ENCODE measurements at regions of chr5 and their contacts with region 1.

Region 1: GRCh38 chr5:141564216-141564692 is 54.5 kb downstream of the DIAPH1 start:
- DNase-seq: peak; percentile 75
- ATAC-seq: peak; percentile 90
- H3K4me3 Mint-ChIP-seq: peak overlapping the region; percentile 12
- H3K27ac Mint-ChIP-seq: peak overlapping the region; percentile 74
- H3K4me1 Mint-ChIP-seq: peaks cover 41% of the 10 kb centered on the region
- H3K27me3 Mint-ChIP-seq: no peaks in the 10 kb centered on the region

Region 2: DNA sequence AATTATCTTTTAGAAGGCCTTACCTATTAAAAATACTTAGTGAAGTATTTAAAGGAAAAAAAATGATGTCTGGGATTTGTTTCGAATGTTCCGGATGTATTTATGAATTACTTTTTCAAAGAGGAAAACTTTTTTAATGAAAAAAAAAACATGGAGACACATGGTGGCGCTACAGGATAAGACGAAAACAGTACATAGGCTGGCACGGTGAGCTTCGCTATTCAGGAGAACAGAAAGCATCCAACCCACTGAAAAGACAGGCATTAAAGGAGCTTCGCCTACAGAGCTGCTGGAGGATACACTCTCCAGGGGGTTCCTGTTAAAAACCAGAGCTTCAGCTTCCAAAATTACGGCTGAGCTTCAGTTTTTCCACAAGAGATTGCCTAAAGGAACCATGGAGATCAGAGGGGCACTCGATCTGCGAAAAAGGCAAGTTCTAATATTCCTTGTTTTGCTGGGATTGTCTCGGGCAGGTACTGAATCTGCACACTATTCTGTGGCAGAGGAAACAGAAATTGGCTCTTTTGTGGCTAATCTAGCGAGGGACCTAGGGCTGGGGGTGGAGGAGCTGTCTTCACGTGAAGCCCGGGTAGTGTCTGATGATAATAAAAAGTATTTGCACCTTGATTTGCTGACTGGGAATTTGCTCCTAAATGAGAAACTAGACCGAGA is 341.0 kb before region 1 on chr5 and contains the start of gene PCDHB14:
- CTCF ChIA-PET with region 1: interaction called, 10 read pairs
- POLR2A ChIA-PET with region 1: no interaction called
- intact Hi-C with region 1: loop called in 1 of 2 experiments (anchors 5 kb)
- DNase-seq: no peak
- ATAC-seq: no peak
- H3K4me3 Mint-ChIP-seq: peak within 1 kb of the TSS; percentile 18
- H3K27ac Mint-ChIP-seq: no peak within 1 kb of the TSS
- H3K4me1 Mint-ChIP-seq: peaks cover 5% of the 10 kb centered on the region
- H3K27me3 Mint-ChIP-seq: peaks cover 48% of the 10 kb centered on the region
- total RNA-seq, gene PCDHB14: not detected

Region 3: DNA sequence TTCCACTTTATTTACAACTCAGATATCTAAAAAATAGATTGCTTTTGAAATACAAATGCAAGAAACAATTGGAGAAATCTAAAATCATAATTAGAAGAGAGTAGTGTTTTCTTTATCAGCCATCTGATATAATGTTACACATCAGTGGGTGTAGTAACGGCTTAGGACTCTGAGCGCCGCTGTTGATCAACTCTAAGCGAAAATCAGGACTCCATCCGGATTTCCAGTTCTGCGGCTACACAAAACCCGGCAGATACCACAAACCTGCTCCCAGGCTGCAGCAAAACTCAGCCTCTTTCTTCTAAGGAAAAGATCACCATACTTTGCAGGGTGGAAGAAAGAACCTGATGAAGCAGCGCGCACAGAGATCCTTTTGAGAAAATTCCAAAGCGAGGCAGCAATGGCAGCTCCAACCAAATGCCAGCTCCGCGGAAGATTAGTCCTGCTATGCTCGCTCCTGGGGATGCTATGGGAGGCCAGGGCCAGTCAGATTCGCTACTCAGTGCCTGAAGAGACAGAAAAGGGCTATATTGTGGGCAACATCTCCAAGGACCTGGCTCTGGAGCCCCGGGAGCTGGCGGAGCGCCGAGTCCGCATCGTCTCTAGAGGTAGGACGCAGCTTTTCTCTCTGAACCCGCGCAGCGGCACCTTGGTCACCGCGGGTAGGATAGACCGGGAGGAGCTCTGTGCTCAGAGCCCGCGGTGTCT is 161.5 kb before region 1 on chr5 and contains the start of gene PCDHGA9:
- CTCF ChIA-PET with region 1: interaction called, 12 read pairs
- POLR2A ChIA-PET with region 1: no interaction called
- intact Hi-C with region 1: no loop called
- DNase-seq: peak; percentile 46
- ATAC-seq: no peak
- H3K4me3 Mint-ChIP-seq: no peak within 1 kb of the TSS
- H3K27ac Mint-ChIP-seq: no peak within 1 kb of the TSS
- H3K4me1 Mint-ChIP-seq: no peaks in the 10 kb centered on the region
- H3K27me3 Mint-ChIP-seq: peaks cover 56% of the 10 kb centered on the region
- total RNA-seq, gene PCDHGA9: 0.09 TPM in 1 of 2 experiments, not detected in the other

Region 4: GRCh38 chr5:141430332-141431113 is 133.7 kb before region 1 on chr5 and contains the start of gene PCDHGA12:
- CTCF ChIA-PET with region 1: interaction called, 19 read pairs
- POLR2A ChIA-PET with region 1: no interaction called
- intact Hi-C with region 1: loop called in 1 of 2 experiments (anchors 1 kb)
- DNase-seq: peak; percentile 68
- ATAC-seq: peak; percentile 73
- H3K4me3 Mint-ChIP-seq: peak within 1 kb of the TSS; percentile 45
- H3K27ac Mint-ChIP-seq: no peak within 1 kb of the TSS
- H3K4me1 Mint-ChIP-seq: peaks cover 17% of the 10 kb centered on the region
- H3K27me3 Mint-ChIP-seq: peaks cover 69% of the 10 kb centered on the region
- total RNA-seq, gene PCDHGA12: 0.07 to 0.09 TPM

Region 5: DNA sequence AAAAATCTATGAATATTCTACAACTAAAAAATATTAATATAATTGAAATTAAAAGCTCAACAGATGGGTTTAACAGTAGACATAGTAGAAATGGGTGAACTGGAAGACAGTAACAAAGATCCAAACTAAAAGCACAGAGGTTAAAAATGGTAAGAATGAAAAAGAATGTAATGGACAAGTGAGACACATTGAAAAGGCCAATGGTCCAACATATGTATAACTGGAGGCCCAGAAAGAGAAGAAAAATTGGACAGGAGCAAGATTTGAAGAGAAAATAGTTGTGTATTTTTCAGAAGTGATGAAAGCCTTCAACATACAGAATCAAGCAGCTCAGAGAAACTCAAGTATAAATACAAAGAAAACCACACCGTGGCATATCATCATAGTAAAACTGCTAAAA is 16.8 kb before region 1 on chr5:
- CTCF ChIA-PET with region 1: interaction called, 16 read pairs
- POLR2A ChIA-PET with region 1: no interaction called
- intact Hi-C with region 1: no loop called
- DNase-seq: no peak
- ATAC-seq: no peak
- H3K4me3 Mint-ChIP-seq: no peak overlapping the region
- H3K27ac Mint-ChIP-seq: no peak overlapping the region
- H3K4me1 Mint-ChIP-seq: peaks cover 20% of the 10 kb centered on the region
- H3K27me3 Mint-ChIP-seq: no peaks in the 10 kb centered on the region

Region 6: DNA sequence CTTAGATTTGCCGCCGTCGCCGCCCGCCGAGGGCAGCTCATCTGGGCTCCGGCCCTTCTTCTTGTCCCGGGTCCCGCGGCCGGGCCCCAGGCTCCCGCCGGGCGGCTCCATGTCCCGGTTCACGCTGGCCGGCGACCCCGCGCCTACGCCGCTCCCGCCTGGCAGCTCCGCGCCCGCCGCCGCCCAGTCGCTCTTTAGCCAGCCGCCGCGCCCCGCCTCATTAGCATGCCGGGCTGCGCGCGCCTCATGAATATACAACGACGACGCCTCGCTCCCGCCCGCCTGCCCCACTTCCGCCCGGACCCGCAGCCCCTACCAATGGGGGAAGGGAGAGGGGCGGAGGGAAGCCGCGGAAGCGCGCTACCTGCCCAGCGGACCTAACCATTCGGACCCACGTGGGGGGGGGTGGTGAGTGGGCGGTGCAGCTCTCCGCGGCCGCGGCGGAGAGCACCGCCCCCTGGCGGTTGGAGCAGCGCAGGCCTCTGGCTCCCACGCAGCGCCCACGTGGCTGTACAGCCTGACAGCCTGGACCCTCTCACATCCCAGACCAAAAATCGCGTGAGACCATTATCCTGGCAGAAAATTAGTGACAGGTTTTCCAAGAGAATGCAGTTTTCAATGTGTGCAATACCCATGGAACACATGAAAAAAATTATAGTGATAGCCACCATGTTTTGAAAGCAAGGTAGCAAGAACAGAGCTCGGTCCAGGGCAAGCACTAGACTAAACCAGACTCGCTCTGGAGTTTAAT is 54.7 kb after region 1 on chr5 and contains the start of gene DIAPH1:
- CTCF ChIA-PET with region 1: interaction called, 24 read pairs
- POLR2A ChIA-PET with region 1: no interaction called
- intact Hi-C with region 1: loop called (anchors 1 to 2 kb)
- DNase-seq: peak; percentile 99
- ATAC-seq: peak; percentile 88
- H3K4me3 Mint-ChIP-seq: peak within 1 kb of the TSS; percentile 98
- H3K27ac Mint-ChIP-seq: peak within 1 kb of the TSS; percentile 98
- H3K4me1 Mint-ChIP-seq: peaks cover 64% of the 10 kb centered on the region
- H3K27me3 Mint-ChIP-seq: no peaks in the 10 kb centered on the region
- total RNA-seq, gene DIAPH1: 185 to 212 TPM

Region 7: DNA sequence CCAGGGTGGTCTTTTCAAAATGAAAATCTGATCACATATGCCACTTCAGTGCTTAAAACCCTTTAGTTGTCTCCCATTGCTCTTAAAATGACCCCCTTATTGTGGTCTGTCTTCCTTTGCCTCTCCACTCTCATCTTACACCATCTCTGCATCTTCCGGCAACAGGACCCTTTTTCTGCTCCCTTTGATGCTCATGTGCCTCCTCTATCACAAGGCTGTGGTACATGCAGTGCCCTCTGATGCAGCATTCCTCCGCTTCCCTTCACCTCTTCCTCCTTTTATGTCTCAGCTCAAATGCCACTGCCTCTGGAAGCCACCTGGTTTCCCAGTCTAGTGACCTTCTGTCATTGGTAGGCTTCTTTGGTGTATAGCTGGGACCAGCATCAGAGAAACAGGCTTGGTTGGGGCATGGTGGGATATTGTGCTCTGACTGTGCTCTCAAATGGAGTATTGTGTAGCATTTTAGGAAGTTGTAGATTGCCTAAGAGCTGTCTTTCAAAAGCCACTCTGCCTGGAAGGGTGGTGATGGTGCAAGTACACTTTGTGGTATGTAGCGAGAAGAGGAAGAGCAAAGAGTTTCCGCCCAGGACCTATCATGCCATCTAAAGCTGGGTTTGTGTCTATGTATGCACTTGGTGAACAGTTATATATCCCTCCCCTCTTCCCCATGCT is 1234.0 kb after region 1 on chr5:
- CTCF ChIA-PET with region 1: no interaction called
- POLR2A ChIA-PET with region 1: no interaction called
- intact Hi-C with region 1: no loop called
- DNase-seq: peak; percentile 35
- ATAC-seq: peak; percentile 9
- H3K4me3 Mint-ChIP-seq: no peak overlapping the region
- H3K27ac Mint-ChIP-seq: peak overlapping the region; percentile 58
- H3K4me1 Mint-ChIP-seq: peaks cover 75% of the 10 kb centered on the region
- H3K27me3 Mint-ChIP-seq: no peaks in the 10 kb centered on the region